ENCODE measurements at regions of chr2 and their contacts with region 1.

Region 1: DNA sequence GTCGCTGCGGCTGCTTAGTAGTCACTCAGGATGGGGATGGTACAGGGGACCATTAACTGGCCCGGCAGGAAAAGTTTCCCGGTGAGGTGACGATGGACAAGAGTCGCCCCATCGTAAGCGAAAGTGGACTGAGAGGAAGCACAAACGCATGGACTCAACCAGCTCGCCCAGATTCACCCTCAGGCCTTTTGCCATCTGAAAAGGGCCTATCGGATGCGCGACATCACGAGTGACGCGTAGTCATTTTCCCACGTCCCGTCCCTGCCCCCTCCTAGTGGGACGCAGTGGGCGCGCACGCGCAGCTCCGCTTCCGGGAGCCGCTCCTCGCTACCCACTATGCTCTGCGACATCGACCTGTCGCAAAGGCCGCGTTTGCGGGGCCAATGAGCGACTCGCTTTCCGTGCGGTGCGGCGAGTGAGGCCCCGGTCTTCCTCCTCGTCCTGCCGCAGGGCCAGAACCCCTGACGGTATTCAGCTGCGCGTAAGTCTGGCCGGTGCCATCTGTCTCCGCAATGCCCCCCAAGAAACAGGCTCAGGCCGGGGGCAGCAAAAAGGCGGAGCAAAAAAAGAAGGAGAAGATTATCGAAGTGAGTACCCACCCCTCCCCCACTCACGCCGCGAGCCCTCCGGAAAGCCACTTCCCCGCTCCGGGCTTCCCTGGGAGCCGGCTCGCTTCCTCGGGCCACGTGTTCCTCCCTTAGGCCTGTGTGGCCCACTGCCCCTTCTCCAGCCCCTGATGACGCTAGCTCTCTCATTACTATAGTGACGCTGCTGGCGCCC is at the start of gene ZC3H15:
- DNase-seq: peak; percentile 98
- H3K4me3 Mint-ChIP-seq: peak within 1 kb of the TSS; percentile 97
- H3K27ac Mint-ChIP-seq: peak within 1 kb of the TSS; percentile 96
- H3K4me1 Mint-ChIP-seq: peaks cover 60% of the 10 kb centered on the region
- H3K27me3 Mint-ChIP-seq: no peaks in the 10 kb centered on the region
- total RNA-seq, gene ZC3H15: 82.5 to 87.1 TPM

Region 2: GRCh38 chr2:185990861-185991525 is 495.1 kb before region 1 on chr2:
- CTCF ChIA-PET with region 1: no interaction called
- POLR2A ChIA-PET with region 1: no interaction called
- intact Hi-C with region 1: loop called (anchors 10 kb)
- DNase-seq: no peak
- H3K4me3 Mint-ChIP-seq: no peak overlapping the region
- H3K27ac Mint-ChIP-seq: no peak overlapping the region
- H3K4me1 Mint-ChIP-seq: no peaks in the 10 kb centered on the region
- H3K27me3 Mint-ChIP-seq: no peaks in the 10 kb centered on the region

Region 3: DNA sequence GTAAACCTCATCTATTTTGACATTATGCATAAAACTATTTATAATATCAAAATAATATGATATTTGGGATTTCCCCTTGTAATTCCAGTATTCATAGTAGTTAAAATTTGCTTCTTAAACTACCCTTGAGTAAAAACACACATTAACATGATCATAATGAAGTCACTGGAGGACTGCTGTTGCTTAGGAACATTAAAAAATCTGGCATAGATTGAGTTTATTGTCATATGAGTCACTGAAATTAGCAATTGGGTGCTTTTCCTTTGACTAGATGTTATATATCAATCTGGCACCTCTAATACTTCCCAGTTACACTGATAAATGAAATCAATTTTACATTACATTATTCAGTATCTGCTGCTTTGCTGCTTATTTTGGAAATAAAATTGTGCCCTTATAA is 57.0 kb before region 1 on chr2:
- CTCF ChIA-PET with region 1: no interaction called
- POLR2A ChIA-PET with region 1: no interaction called
- intact Hi-C with region 1: loop called (anchors 2 kb)
- DNase-seq: no peak
- H3K4me3 Mint-ChIP-seq: no peak overlapping the region
- H3K27ac Mint-ChIP-seq: no peak overlapping the region
- H3K4me1 Mint-ChIP-seq: peaks cover 10% of the 10 kb centered on the region
- H3K27me3 Mint-ChIP-seq: no peaks in the 10 kb centered on the region

Region 4: GRCh38 chr2:186532891-186533290 is 46.8 kb after region 1 on chr2:
- CTCF ChIA-PET with region 1: no interaction called
- POLR2A ChIA-PET with region 1: no interaction called
- intact Hi-C with region 1: no loop called
- DNase-seq: no peak
- H3K4me3 Mint-ChIP-seq: no peak overlapping the region
- H3K27ac Mint-ChIP-seq: no peak overlapping the region
- H3K4me1 Mint-ChIP-seq: no peaks in the 10 kb centered on the region
- H3K27me3 Mint-ChIP-seq: peaks cover 2% of the 10 kb centered on the region

Measured in activated CD4-positive, alpha-beta memory T cell treated with anti-CD3 and anti-CD28 coated beads for 36 hours (primary cell).